ENCODE measurements at regions of chr6 and their contacts with region 1.

Region 1: DNA sequence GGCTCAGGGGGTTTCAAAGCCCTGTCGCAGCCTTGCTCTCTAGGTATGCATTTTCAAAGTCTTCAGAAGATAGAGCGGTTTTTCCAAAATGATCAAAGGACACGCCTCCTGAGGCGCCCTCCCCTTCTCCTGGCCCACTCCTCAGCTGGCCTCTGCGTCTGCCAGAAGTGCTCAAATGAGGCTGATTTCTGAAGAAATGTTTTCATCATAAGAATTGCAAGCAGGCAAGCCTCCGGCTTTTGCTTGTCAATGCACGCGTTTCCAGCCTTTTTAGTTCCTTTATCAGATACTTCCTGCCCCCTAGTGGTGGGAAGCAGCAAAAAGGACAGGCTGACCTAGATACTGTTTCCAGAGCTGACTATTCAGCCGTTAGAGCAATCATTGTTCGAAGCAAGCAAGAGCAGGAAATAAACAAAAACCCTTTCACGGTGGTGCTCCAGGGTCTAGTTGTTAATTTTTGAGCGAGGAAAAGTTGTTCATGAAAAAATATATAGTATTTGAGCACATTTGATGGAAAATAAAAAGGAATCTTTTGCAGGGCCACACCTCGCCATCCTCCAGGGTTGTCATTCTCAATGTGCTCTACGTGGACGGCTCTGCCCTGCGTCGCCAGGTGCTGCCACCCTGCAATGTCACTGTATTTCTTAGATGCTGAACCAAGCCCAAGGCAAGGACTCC is 93.4 kb upstream of the ASF1A start:
- DNase-seq: peak; percentile 26
- H3K4me3 ChIP-seq: no peak overlapping the region
- H3K27me3 ChIP-seq: no peaks in the 10 kb centered on the region
- CTCF ChIP-seq: peak; percentile 90

Region 2: DNA sequence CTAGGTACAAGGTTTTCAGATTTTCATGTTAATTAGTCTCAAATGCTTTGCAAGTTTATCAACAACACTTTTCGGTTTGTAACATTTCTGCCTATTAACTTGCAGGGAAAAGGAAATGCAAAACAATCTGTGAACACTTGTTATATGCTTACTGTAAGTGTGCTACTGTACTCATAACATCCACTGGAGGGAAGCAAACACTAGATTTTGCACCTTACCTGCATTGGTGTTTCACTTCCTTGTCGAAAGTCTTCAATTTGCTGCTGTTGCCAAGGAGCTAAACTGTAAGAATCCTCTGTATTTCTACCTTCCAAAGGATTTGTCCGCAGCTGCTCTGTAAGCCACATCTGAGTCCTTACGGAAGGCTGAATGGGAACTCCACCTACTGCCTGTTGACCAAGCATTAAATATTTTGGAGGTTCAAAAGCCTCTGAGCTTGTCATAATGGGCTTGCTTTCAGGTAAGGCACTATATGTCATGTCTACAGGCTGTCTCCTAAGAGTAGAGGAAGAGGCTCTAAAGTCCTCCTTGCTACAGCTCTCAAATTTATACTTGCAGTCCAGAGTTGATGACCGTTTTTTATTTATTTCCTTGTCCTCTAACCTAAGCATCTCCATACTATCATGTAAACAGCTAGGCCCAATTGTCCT is 235.1 kb before region 1 on chr6:
- CTCF ChIA-PET with region 1: interaction called, 12 read pairs
- POLR2A ChIA-PET with region 1: no interaction called
- DNase-seq: no peak
- H3K4me3 ChIP-seq: no peak overlapping the region
- H3K27me3 ChIP-seq: no peaks in the 10 kb centered on the region
- CTCF ChIP-seq: peak; percentile 28

Region 3: DNA sequence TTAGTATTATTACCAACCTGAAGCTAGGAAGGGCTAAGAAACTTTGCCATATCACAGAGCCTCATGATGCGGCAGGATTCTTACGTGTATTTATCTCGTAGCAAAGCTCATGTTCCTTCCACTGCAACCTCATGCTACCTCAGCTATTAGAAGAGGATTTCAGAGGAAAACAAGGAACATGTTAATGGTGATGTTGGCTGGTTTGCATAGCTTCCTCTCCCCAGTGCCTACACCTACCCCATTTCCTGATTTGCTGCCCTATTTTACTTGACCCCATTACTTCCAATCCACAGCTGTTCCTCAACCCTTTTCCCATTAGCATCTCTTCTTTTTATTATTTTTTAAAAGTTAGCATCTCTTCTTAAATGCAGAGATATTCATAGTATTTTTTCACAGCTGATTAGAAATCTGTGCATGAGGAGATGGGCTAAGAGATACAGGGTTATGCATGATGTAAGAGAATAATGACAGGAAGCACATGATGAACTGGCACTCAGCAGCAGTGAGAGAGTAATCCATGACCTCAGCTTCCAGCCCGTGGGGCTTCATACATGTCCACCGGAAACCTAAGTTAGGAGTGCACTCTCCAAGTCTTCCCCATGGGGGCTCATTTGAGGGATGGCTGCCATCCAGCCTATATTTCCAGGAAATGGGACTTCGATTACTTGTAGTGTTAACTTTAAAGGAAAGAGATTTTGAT is 12.7 kb before region 1 on chr6:
- CTCF ChIA-PET with region 1: interaction called, 22 read pairs
- POLR2A ChIA-PET with region 1: no interaction called
- DNase-seq: no peak
- H3K4me3 ChIP-seq: no peak overlapping the region
- H3K27me3 ChIP-seq: no peaks in the 10 kb centered on the region
- CTCF ChIP-seq: no peak